ENCODE measurements at regions of chr19 and their contacts with region 1.

Region 1: GRCh38 chr19:48637170-48637947 is at the start of gene DBP:
- DNase-seq: peak; percentile 99 to 100 (median 100)
- ATAC-seq: peak; percentile 70
- H3K4me3 ChIP-seq: peak within 1 kb of the TSS; percentile 76 to 97
- H3K4me3 Mint-ChIP-seq: peak within 1 kb of the TSS; percentile 98
- H3K27ac ChIP-seq: peak within 1 kb of the TSS; percentile 93 to 95
- H3K27ac Mint-ChIP-seq: peak within 1 kb of the TSS; percentile 98
- H3K4me1 ChIP-seq: peaks cover 43% of the 10 kb centered on the region
- H3K4me1 Mint-ChIP-seq: peaks cover 43% of the 10 kb centered on the region
- H3K27me3 ChIP-seq: no peaks in the 10 kb centered on the region
- H3K27me3 Mint-ChIP-seq: no peaks in the 10 kb centered on the region
- CTCF ChIP-seq: no peak
- total RNA-seq, gene DBP: 24.8 to 25.6 TPM

Region 2: GRCh38 chr19:48170038-48170812 is 467.1 kb before region 1 on chr19 and contains the starts of genes LIG1 and ZSWIM9:
- CTCF ChIA-PET with region 1: no interaction called
- POLR2A ChIA-PET with region 1: no interaction called
- intact Hi-C with region 1: loop called (anchors 2 to 5 kb)
- DNase-seq: peak; percentile 82 to 95 (median 90)
- ATAC-seq: peak; percentile 81
- H3K4me3 ChIP-seq: peak within 1 kb of the TSS; percentile 96 to 100
- H3K4me3 Mint-ChIP-seq: peak within 1 kb of the TSS; percentile 98
- H3K27ac ChIP-seq: peak within 1 kb of the TSS; percentile 82 to 92
- H3K27ac Mint-ChIP-seq: peak within 1 kb of the TSS; percentile 97
- H3K4me1 ChIP-seq: peaks cover 7% of the 10 kb centered on the region
- H3K4me1 Mint-ChIP-seq: peaks cover 22% of the 10 kb centered on the region
- H3K27me3 ChIP-seq: no peaks in the 10 kb centered on the region
- H3K27me3 Mint-ChIP-seq: no peaks in the 10 kb centered on the region
- CTCF ChIP-seq: peak; percentile 25
- total RNA-seq, gene LIG1: 62.5 to 67.5 TPM
- total RNA-seq, gene ZSWIM9: 2.5 to 4.5 TPM

Region 3: DNA sequence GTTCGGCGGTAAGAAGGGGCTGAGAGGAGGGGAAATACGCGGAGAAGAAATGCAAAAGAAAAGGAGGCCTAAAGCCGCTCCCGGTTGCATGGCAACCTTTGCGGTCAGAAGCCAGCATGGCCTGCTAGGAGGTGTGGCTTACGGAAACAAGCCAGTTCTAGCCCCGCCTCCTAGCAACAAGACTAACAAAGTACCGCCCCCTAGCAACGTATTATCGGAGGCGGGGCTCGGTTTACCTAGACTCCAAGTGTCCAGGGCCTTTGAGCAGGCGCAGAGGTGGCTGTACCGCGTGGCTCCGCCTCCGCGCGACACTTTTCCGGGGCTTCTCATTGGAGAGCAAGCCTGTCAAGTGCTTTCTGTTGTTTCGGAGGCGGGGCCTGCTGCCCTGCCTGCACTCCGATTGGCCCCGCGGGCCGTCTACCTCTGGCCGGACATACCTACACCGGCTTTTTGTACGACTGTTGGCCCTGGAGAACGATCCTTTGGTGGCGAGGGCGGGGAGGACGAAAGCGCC is 168.5 kb before region 1 on chr19:
- CTCF ChIA-PET with region 1: no interaction called
- POLR2A ChIA-PET with region 1: no interaction called
- intact Hi-C with region 1: loop called (anchors 1 to 2 kb)
- DNase-seq: peak; percentile 98 to 100 (median 99)
- ATAC-seq: peak; percentile 85
- H3K4me3 ChIP-seq: peak overlapping the region; percentile 83 to 95
- H3K4me3 Mint-ChIP-seq: peak overlapping the region; percentile 90
- H3K27ac ChIP-seq: peak overlapping the region; percentile 75 to 90
- H3K27ac Mint-ChIP-seq: peak overlapping the region; percentile 85
- H3K4me1 ChIP-seq: peaks cover 15% of the 10 kb centered on the region
- H3K4me1 Mint-ChIP-seq: peaks cover 21% of the 10 kb centered on the region
- H3K27me3 ChIP-seq: no peaks in the 10 kb centered on the region
- H3K27me3 Mint-ChIP-seq: no peaks in the 10 kb centered on the region
- CTCF ChIP-seq: no peak

Region 4: DNA sequence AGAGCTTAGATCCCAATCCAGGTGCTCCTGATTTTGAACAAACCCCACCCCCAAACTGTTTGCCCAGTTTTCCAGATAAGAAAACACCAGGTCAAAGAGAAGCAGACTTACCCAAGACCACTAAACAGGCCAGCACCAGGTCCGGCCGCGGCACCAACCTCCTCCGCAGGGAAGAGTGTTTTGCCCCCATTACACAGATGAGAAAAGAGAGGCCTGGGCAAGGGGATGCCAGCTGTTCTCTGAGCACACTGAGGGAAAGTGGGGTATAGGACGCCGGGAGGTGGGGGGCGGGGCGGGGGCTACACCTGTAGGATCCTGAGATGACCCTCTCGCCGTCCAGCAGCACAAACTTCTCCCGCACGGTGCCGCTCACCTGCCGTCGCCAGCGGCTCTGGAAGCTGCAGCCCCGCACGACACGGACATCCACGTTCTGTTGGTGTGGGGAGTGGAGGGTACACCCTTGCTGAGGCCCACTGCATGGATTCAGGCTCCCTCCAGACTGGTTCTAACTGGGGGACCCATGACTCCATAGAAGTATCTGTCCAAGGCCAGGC is 27.7 kb before region 1 on chr19:
- CTCF ChIA-PET with region 1: no interaction called
- POLR2A ChIA-PET with region 1: no interaction called
- intact Hi-C with region 1: no loop called
- DNase-seq: no peak
- ATAC-seq: no peak
- H3K4me3 ChIP-seq: no peak overlapping the region
- H3K4me3 Mint-ChIP-seq: no peak overlapping the region
- H3K27ac ChIP-seq: no peak overlapping the region
- H3K27ac Mint-ChIP-seq: no peak overlapping the region
- H3K4me1 ChIP-seq: peaks cover 6% of the 10 kb centered on the region
- H3K4me1 Mint-ChIP-seq: peaks cover 4% of the 10 kb centered on the region
- H3K27me3 ChIP-seq: no peaks in the 10 kb centered on the region
- H3K27me3 Mint-ChIP-seq: no peaks in the 10 kb centered on the region
- CTCF ChIP-seq: no peak

Region 5: GRCh38 chr19:48674921-48675824 is 37.8 kb after region 1 on chr19:
- CTCF ChIA-PET with region 1: no interaction called
- POLR2A ChIA-PET with region 1: no interaction called
- intact Hi-C with region 1: loop called in 1 of 2 experiments (anchors 5 kb)
- DNase-seq: peak; percentile 56 to 88 (median 74)
- ATAC-seq: peak; percentile 98
- H3K4me3 ChIP-seq: no peak overlapping the region
- H3K4me3 Mint-ChIP-seq: no peak overlapping the region
- H3K27ac ChIP-seq: no peak overlapping the region
- H3K27ac Mint-ChIP-seq: peak overlapping the region; percentile 45
- H3K4me1 ChIP-seq: peaks cover 9% of the 10 kb centered on the region
- H3K4me1 Mint-ChIP-seq: peaks cover 6% of the 10 kb centered on the region
- H3K27me3 ChIP-seq: no peaks in the 10 kb centered on the region
- H3K27me3 Mint-ChIP-seq: no peaks in the 10 kb centered on the region
- CTCF ChIP-seq: peak; percentile 64

Region 6: GRCh38 chr19:48770260-48770659 is 132.9 kb after region 1 on chr19:
- CTCF ChIA-PET with region 1: no interaction called
- POLR2A ChIA-PET with region 1: no interaction called
- intact Hi-C with region 1: no loop called
- DNase-seq: no peak
- ATAC-seq: no peak
- H3K4me3 ChIP-seq: no peak overlapping the region
- H3K4me3 Mint-ChIP-seq: no peak overlapping the region
- H3K27ac ChIP-seq: no peak overlapping the region
- H3K27ac Mint-ChIP-seq: no peak overlapping the region
- H3K4me1 ChIP-seq: no peaks in the 10 kb centered on the region
- H3K4me1 Mint-ChIP-seq: no peaks in the 10 kb centered on the region
- H3K27me3 ChIP-seq: peaks cover 0 to 4% of the 10 kb centered on the region in 2 experiments
- H3K27me3 Mint-ChIP-seq: peaks cover 17% of the 10 kb centered on the region
- CTCF ChIP-seq: no peak

Region 7: GRCh38 chr19:49118565-49119410 is 481.4 kb after region 1 on chr19 and contains the start of gene C19orf73:
- CTCF ChIA-PET with region 1: no interaction called
- POLR2A ChIA-PET with region 1: no interaction called
- intact Hi-C with region 1: loop called in 1 of 2 experiments (anchors 5 kb)
- DNase-seq: peak; percentile 93 to 98 (median 94)
- ATAC-seq: peak; percentile 83
- H3K4me3 ChIP-seq: peak within 1 kb of the TSS; percentile 68 to 87
- H3K4me3 Mint-ChIP-seq: peak within 1 kb of the TSS; percentile 86
- H3K27ac ChIP-seq: peak within 1 kb of the TSS; percentile 84 to 98
- H3K27ac Mint-ChIP-seq: peak within 1 kb of the TSS; percentile 92
- H3K4me1 ChIP-seq: peaks cover 15% of the 10 kb centered on the region
- H3K4me1 Mint-ChIP-seq: peaks cover 36% of the 10 kb centered on the region
- H3K27me3 ChIP-seq: no peaks in the 10 kb centered on the region
- H3K27me3 Mint-ChIP-seq: no peaks in the 10 kb centered on the region
- CTCF ChIP-seq: peak; percentile 49
- total RNA-seq, gene C19orf73: 0.60 to 0.81 TPM

Region 8: GRCh38 chr19:49869441-49870176 is 1232.2 kb after region 1 on chr19:
- CTCF ChIA-PET with region 1: no interaction called
- POLR2A ChIA-PET with region 1: no interaction called
- intact Hi-C with region 1: loop called in 1 of 2 experiments (anchors 5 kb)
- DNase-seq: peak; percentile 81 to 98 (median 89)
- ATAC-seq: peak; percentile 75
- H3K4me3 ChIP-seq: peak overlapping the region; percentile 73 to 85
- H3K4me3 Mint-ChIP-seq: no peak overlapping the region
- H3K27ac ChIP-seq: peak overlapping the region; percentile 64 to 96
- H3K27ac Mint-ChIP-seq: no peak overlapping the region
- H3K4me1 ChIP-seq: peaks cover 36% of the 10 kb centered on the region
- H3K4me1 Mint-ChIP-seq: peaks cover 41% of the 10 kb centered on the region
- H3K27me3 ChIP-seq: no peaks in the 10 kb centered on the region
- H3K27me3 Mint-ChIP-seq: no peaks in the 10 kb centered on the region
- CTCF ChIP-seq: no peak